Activated B cell treated with CpG ODN at 0.5 μM for 24 hours (primary cell): ENCODE measurements at regions of chr6 and their contacts with region 1.

Region 1: GRCh38 chr6:26270903-26271667 is 93.9 kb upstream of the BTN3A2 start:
- DNase-seq: peak; percentile 49
- ATAC-seq: peak; percentile 18
- H3K4me3 Mint-ChIP-seq: no peak overlapping the region
- H3K27ac Mint-ChIP-seq: no peak overlapping the region
- H3K4me1 Mint-ChIP-seq: peaks cover 24% of the 10 kb centered on the region
- H3K27me3 Mint-ChIP-seq: no peaks in the 10 kb centered on the region
- CTCF ChIP-seq: no peak

Region 2: DNA sequence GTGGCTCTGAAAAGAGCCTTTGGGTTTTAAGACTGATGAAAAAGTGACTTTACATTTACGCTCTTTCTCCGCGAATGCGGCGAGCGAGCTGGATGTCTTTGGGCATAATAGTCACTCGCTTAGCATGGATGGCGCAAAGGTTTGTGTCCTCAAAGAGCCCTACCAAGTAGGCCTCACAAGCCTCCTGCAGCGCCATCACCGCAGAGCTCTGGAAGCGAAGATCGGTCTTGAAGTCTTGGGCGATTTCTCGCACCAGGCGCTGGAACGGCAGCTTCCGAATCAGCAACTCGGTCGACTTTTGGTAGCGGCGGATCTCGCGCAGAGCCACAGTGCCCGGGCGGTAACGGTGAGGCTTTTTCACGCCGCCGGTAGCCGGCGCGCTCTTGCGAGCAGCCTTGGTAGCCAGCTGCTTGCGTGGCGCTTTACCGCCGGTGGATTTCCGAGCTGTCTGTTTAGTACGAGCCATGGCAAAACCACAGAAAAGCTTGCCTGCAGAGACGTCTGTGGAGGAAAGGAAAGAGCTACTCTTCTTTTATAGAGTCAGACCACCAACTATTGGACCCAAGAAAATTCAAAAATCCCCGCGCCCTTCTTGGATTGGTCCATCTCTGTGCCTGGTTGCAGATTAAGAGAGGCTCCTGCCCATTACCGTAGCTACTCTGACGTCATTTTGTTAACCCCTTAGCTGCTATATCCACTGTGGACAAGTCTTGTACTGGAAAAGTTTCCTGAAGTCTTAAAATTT is 239.3 kb before region 1 on chr6:
- CTCF ChIA-PET with region 1: no interaction called
- POLR2A ChIA-PET with region 1: interaction called, 20 read pairs
- intact Hi-C with region 1: loop called (anchors 5 kb)
- DNase-seq: peak; percentile 55
- ATAC-seq: peak; percentile 62
- H3K4me3 Mint-ChIP-seq: peak overlapping the region; percentile 93
- H3K27ac Mint-ChIP-seq: peak overlapping the region; percentile 98
- H3K4me1 Mint-ChIP-seq: peaks cover 40% of the 10 kb centered on the region
- H3K27me3 Mint-ChIP-seq: peaks cover 2% of the 10 kb centered on the region
- CTCF ChIP-seq: no peak

Region 3: DNA sequence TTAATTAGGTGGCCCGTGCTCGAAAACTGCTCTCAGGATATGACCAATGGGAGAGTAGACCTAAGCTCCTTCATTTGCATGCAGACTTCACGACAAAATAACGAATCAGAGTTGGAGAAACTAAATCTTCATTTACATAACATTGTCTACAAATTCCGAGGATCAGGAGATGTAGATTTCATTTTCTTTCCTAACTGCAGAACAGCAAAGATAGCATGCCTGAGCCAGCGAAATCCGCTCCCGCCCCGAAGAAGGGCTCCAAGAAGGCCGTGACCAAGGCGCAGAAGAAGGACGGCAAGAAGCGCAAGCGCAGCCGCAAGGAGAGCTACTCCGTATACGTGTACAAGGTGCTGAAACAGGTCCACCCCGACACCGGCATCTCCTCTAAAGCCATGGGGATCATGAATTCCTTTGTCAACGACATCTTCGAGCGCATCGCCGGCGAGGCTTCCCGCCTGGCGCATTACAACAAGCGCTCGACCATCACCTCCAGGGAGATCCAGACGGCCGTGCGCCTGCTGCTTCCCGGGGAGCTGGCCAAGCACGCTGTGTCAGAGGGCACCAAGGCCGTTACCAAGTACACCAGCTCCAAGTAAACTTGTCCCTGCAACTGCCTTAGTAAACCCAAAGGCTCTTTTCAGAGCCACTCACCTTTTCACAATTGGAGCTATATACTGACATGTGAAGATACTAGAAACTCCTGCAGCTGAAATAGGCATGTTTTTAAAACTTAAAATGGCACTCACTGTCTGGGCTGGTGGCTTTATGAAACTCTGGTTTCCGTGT is 87.3 kb before region 1 on chr6:
- CTCF ChIA-PET with region 1: interaction called, 4 read pairs
- POLR2A ChIA-PET with region 1: interaction called, 49 read pairs
- intact Hi-C with region 1: no loop called
- DNase-seq: peak; percentile 60
- ATAC-seq: peak; percentile 86
- H3K4me3 Mint-ChIP-seq: peak overlapping the region; percentile 98
- H3K27ac Mint-ChIP-seq: peak overlapping the region; percentile 91
- H3K4me1 Mint-ChIP-seq: peaks cover 30% of the 10 kb centered on the region
- H3K27me3 Mint-ChIP-seq: no peaks in the 10 kb centered on the region
- CTCF ChIP-seq: no peak

Region 4: GRCh38 chr6:26240154-26241032 is 30.7 kb before region 1 on chr6:
- CTCF ChIA-PET with region 1: no interaction called
- POLR2A ChIA-PET with region 1: interaction called, 195 read pairs
- intact Hi-C with region 1: loop called (anchors 1 kb)
- DNase-seq: peak; percentile 61
- ATAC-seq: peak; percentile 79
- H3K4me3 Mint-ChIP-seq: peak overlapping the region; percentile 82
- H3K27ac Mint-ChIP-seq: peak overlapping the region; percentile 92
- H3K4me1 Mint-ChIP-seq: peaks cover 26% of the 10 kb centered on the region
- H3K27me3 Mint-ChIP-seq: no peaks in the 10 kb centered on the region
- CTCF ChIP-seq: no peak

Region 5: DNA sequence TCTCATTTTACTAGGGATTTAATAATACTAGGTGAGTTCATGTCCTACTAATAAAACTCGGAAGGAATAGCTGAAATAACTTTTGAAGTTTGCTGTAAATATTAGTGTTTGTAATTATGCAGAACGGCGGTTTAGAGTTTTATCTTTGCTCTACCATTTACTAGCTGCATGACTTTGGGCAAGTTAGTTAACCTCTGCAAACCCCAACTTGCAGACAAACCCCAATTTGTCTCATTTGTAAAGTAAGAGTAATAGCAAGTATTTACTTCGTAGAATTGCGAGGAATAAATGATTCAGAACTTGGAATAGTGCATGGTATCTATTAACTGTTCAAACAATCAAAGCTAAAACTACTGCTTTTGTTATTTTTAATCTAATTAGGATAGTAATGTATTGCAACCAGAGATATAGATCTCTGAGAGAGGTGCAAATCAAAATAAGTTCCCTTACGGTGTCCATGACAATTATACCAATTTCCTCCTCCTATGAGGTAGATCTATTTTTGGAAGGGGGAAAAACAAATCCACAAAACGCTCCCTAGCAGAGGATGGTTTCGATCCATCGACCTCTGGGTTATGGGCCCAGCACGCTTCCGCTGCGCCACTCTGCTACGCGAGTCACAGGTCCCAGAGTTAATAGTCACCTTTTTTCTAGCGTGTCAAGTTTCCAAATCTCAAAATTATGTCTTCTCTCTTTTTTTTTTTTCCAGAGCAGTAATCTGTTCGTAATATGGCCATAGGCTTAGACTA is 58.9 kb after region 1 on chr6:
- CTCF ChIA-PET with region 1: no interaction called
- POLR2A ChIA-PET with region 1: no interaction called
- intact Hi-C with region 1: loop called (anchors 2 kb)
- DNase-seq: no peak
- ATAC-seq: peak; percentile 18
- H3K4me3 Mint-ChIP-seq: peak overlapping the region; percentile 41
- H3K27ac Mint-ChIP-seq: peak overlapping the region; percentile 65
- H3K4me1 Mint-ChIP-seq: peaks cover 25% of the 10 kb centered on the region
- H3K27me3 Mint-ChIP-seq: peaks cover 42% of the 10 kb centered on the region
- CTCF ChIP-seq: no peak

Region 6: DNA sequence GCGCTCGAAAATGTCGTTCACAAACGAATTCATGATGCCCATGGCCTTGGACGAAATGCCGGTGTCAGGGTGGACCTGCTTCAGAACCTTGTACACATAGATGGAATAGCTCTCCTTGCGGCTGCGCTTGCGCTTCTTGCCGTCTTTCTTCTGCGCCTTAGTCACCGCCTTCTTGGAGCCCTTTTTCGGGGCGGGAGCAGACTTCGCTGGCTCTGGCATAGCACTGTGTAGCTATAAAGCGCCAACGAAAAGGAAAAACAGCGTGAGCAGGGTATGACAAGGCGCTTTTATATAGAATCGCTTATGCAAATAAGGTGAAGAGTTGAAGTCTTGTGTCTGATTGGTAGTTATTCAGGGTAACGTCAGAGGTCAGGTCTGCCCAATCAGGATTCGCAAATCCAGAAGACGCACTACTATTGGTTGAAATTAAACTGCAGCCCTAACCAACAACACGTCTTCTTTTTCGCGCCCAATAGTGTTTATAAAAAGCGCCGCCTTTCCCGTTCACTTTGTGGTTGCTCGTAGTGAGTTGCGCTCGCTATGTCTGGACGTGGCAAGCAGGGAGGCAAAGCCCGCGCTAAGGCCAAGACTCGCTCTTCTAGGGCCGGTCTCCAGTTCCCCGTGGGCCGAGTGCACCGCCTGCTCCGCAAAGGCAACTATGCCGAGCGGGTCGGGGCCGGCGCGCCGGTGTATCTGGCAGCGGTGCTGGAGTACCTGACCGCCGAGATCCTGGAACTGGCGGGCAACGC is 861.6 kb after region 1 on chr6:
- CTCF ChIA-PET with region 1: no interaction called
- POLR2A ChIA-PET with region 1: interaction called, 26 read pairs
- intact Hi-C with region 1: no loop called
- DNase-seq: peak; percentile 77
- ATAC-seq: peak; percentile 84
- H3K4me3 Mint-ChIP-seq: no peak overlapping the region
- H3K27ac Mint-ChIP-seq: no peak overlapping the region
- H3K4me1 Mint-ChIP-seq: peaks cover 14% of the 10 kb centered on the region
- H3K27me3 Mint-ChIP-seq: no peaks in the 10 kb centered on the region
- CTCF ChIP-seq: no peak

Region 7: DNA sequence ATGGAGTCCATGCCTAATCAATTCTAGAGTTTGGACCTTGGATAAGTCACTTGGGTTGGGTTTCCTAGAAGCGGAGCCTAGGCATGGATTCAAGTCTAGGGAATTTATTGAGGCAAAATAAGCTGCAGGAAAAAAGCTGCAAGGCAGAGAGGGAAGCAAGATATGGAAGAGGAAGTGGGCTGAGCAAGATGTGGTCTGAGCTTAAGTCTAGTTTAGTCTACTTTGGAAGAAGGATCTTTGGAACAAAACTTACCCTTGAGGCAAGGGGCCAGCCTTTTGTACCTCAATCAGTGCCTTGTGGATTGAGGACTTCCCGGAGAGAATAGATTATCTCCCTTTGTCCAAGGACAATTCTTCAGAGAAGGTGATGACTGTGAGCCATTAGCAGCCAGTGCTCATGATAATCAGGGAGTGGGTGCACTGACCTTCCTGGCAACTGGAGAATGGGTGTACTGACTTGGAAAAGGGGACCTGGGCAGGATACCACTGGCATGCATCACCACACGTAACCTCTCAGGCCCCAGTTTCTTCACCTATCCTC is 1964.9 kb after region 1 on chr6:
- CTCF ChIA-PET with region 1: no interaction called
- POLR2A ChIA-PET with region 1: no interaction called
- intact Hi-C with region 1: no loop called
- DNase-seq: no peak
- ATAC-seq: no peak
- H3K4me3 Mint-ChIP-seq: no peak overlapping the region
- H3K27ac Mint-ChIP-seq: no peak overlapping the region
- H3K4me1 Mint-ChIP-seq: no peaks in the 10 kb centered on the region
- H3K27me3 Mint-ChIP-seq: no peaks in the 10 kb centered on the region
- CTCF ChIP-seq: no peak